IMR-90 (cell line): ENCODE measurements at regions of chr9 and their contacts with region 1.

Region 1: DNA sequence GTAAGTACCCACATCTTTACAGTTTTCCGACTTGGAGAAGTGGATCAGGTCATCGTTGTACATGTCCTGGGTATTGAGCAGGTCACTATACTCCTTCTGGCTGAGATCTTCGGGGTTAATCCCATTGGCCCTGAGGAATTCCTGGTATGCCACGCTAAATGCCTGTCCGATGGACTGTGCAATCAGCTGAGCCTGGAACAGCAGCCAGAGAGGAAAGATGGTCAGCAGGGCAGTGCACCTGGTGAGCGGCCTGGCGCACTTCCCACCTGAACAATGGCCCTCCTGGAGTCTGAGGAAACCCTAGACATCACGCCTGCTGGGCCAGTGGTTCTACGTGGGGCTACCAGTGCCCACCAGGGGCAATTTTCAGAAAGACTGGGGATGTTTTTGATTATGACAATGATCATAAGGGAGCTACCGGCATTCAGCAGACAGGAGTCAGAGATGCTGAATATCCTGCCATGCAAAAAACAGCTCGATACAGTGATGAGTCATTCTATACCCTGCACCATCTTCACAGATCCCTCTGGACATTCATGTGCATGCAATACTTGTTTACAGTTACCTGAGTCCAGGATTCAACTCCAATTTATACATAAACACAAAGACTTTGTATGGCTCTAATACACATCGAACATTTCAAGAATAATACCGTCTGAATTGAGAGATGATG is 127.2 kb downstream of the ENTREP1 start:
- DNase-seq: no peak
- ATAC-seq: peak; percentile 40; the same call in 1 of the 2 replicates
- H3K4me3 ChIP-seq: no peak overlapping the region
- H3K27ac ChIP-seq: no peak overlapping the region
- H3K4me1 ChIP-seq: no peaks in the 10 kb centered on the region
- H3K27me3 ChIP-seq: no peaks in the 10 kb centered on the region
- CTCF ChIP-seq: no peak
- POLR2A ChIP-seq: no peak
- RAD21 ChIP-seq: no peak

Region 2: GRCh38 chr9:69502671-69503301 is 50.5 kb after region 1 on chr9:
- CTCF ChIA-PET with region 1: no interaction called
- POLR2A ChIA-PET with region 1: no interaction called
- dilution Hi-C with region 1: no loop called
- in situ Hi-C with region 1: loop called (anchors 5 kb)
- intact Hi-C with region 1: no loop called
- DNase-seq: peak; percentile 41
- ATAC-seq: peak; percentile 78
- H3K4me3 ChIP-seq: no peak overlapping the region
- H3K27ac ChIP-seq: no peak overlapping the region
- H3K4me1 ChIP-seq: no peaks in the 10 kb centered on the region
- H3K27me3 ChIP-seq: no peaks in the 10 kb centered on the region
- CTCF ChIP-seq: no peak
- POLR2A ChIP-seq: no peak
- RAD21 ChIP-seq: no peak